ENCODE measurements at regions of chr11 and their contacts with region 1.

Region 1: DNA sequence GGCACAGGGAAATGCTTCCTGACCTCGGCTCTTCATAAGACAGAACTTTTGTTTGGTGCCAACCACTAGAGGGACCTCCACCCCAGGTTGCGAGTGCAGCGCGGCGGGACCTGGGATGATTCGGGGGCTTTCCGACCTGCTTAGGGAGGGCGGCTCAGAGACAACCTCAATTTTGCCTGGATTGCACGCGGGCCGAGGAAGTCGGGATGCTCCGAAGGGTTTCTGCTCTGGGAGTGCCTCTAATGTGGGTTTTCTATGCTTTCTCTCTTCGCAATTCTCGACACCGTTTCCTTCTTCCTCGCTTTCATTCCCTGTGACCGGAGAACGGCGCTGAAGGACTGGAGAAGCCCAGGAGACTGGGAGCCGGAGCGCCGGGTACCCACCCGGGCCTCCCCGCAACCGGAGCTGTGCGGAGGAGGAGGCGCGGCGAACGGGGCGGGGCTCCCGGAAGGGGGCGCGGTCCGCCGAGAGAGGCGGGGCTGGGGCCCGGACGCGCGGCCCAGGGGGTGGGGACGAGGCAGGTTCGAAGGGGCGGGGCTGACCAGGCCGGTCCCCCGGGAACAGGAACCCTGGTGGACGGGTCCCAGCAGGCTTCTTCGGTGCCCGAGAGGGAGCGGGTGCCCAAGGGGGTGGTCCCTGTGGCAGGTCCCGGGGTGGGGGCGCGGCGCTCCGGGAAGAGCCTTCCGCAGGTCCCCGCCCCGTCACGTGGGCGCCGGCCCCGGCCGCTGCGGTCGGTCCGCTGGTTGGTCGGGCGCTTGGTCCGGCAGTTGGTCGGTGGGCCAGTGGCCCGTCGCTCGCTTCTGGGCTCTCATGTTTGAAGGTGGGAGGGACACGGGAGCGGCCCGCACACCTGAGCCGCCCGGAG is at the start of gene PPFIBP2:
- DNase-seq: peak; percentile 81 to 88
- ATAC-seq: peak; percentile 87 to 96 (median 92)
- H3K4me3 ChIP-seq: peak within 1 kb of the TSS; percentile 56 to 89 (median 84)
- H3K27ac ChIP-seq: peak within 1 kb of the TSS; percentile 87 to 98 (median 93)
- H3K4me1 ChIP-seq: peaks cover 10 to 49% (median 37%) of the 10 kb centered on the region in 9 donors
- H3K27me3 ChIP-seq: no peaks in the 10 kb centered on the region
- CTCF ChIP-seq: peak; percentile 43 to 78 (median 63)
- total RNA-seq, gene PPFIBP2: 14.4 to 40.7 (median 21.4) TPM

Region 2: DNA sequence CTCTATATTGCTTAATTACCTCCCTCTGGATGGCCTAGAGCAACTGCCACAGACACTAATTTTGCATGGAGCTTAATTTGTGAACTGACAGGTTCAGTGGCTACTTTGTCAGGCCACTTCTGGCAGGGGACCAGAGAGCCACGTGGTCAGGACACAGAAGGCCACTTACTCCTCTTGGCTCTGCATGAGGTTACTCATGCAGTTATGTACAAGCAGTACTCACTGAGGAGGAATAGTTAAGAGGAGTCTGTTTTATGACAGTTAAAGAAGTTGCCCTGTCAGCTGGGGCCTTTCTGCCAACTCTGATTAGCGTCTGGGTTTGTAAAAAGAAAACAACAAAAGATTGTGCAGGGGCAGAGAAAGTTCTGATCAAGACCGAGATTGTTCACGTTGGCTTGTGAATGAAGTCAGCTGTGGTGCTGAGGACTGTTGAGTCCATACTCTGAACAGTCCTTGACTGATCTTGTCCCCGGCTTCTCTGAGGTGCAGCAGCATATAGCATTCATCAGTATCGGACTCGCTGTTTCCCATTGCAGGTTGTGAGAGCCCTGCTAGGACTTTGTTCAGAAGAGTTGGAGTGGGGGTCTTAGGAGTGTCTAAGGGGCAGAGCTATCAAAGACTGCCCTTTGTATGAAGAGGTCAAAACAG is 41.7 kb after region 1 on chr11:
- intact Hi-C with region 1: loop called in 2 of 10 experiments (anchors 2 to 5 kb)
- DNase-seq: peak; percentile 64 to 75
- ATAC-seq: peak; percentile 42 to 97 (median 93)
- H3K4me3 ChIP-seq: no peak overlapping the region
- H3K27ac ChIP-seq: peak overlapping the region in 5 of 10 donors; percentile 6 to 57 (median 30)
- H3K4me1 ChIP-seq: peaks cover 0 to 13% (median 0%) of the 10 kb centered on the region in 9 donors
- H3K27me3 ChIP-seq: no peaks in the 10 kb centered on the region
- CTCF ChIP-seq: no peak

Region 3: GRCh38 chr11:7577291-7578190 is 64.1 kb after region 1 on chr11:
- intact Hi-C with region 1: loop called in 5 of 10 experiments (anchors 1 to 10 kb)
- DNase-seq: peak; percentile 36 to 63
- ATAC-seq: peak; percentile 53 to 71 (median 64)
- H3K4me3 ChIP-seq: peak overlapping the region; percentile 9 to 56 (median 47)
- H3K27ac ChIP-seq: peak overlapping the region; percentile 65 to 88 (median 82)
- H3K4me1 ChIP-seq: peaks cover 7 to 76% (median 59%) of the 10 kb centered on the region in 9 donors
- H3K27me3 ChIP-seq: peaks cover 0 to 22% (median 0%) of the 10 kb centered on the region in 7 donors
- CTCF ChIP-seq: peak in 1 of 9 donors; percentile 11

Region 4: DNA sequence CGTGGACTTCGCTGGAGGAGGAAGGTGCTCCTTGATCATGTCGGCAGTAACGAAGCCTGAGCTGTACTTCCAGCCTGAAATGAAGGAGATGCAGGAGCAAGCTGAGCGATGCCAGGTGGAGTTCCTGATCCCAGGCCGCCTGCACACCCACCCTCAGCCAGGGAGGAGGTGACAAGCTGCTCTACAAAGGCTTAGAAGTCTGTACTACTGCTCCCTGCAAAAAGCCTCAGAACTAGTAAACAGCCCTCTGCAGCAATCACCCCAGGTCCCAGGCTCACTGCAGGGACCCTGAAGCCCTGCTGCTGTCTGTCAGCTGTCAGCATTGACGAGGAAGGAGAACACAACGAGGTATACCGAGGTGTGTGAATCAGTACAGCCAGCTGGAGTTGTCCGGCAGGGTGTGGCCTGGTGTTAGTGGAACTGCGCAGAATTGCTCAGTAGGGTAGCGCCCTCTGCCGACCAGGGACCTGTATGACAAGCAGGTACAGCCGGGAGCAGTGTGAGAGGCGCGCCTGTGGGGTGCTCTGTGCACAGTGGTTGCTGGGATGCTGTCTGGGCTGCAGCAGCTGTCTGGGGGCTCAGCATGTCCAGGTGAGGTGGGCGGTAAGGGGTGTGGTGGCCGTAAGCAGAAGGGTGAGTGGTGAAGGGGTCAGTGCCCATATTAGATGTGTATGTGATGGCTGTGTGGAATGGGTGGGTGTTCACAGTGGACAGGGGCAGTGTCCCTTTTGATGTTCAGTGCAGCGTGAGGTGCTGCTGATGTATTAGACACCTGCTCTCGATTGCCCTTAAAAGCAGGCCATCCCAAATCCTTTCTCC is 152.2 kb after region 1 on chr11:
- intact Hi-C with region 1: loop called in 1 of 10 experiments (anchors 5 kb)
- DNase-seq: peak; percentile 71 to 81
- ATAC-seq: peak; percentile 85 to 95 (median 92)
- H3K4me3 ChIP-seq: no peak overlapping the region
- H3K27ac ChIP-seq: no peak overlapping the region
- H3K4me1 ChIP-seq: peaks cover 0 to 3% (median 0%) of the 10 kb centered on the region in 9 donors
- H3K27me3 ChIP-seq: peaks cover 0 to 3% (median 0%) of the 10 kb centered on the region in 7 donors
- CTCF ChIP-seq: peak; percentile 64 to 91 (median 81)

Measured in heart right ventricle (tissue), 16 donors.